ENCODE measurements at regions of chr9 and their contacts with region 1.

Region 1: GRCh38 chr9:93003552-93004407 is 54.7 kb upstream of the SUSD3 start:
- DNase-seq: peak; percentile 79
- H3K4me3 Mint-ChIP-seq: no peak overlapping the region
- H3K27ac Mint-ChIP-seq: peak overlapping the region; percentile 87
- H3K4me1 Mint-ChIP-seq: peaks cover 52% of the 10 kb centered on the region
- H3K27me3 Mint-ChIP-seq: no peaks in the 10 kb centered on the region

Region 2: GRCh38 chr9:92404042-92404836 is 599.5 kb before region 1 on chr9 and contains the start of gene OGN:
- CTCF ChIA-PET with region 1: no interaction called
- POLR2A ChIA-PET with region 1: no interaction called
- intact Hi-C with region 1: no loop called
- DNase-seq: no peak
- H3K4me3 Mint-ChIP-seq: no peak within 1 kb of the TSS
- H3K27ac Mint-ChIP-seq: no peak within 1 kb of the TSS
- H3K4me1 Mint-ChIP-seq: peaks cover 22% of the 10 kb centered on the region
- H3K27me3 Mint-ChIP-seq: no peaks in the 10 kb centered on the region
- total RNA-seq, gene OGN: not detected

Region 3: GRCh38 chr9:92911511-92912475 is 92.0 kb before region 1 on chr9:
- CTCF ChIA-PET with region 1: no interaction called
- POLR2A ChIA-PET with region 1: no interaction called
- intact Hi-C with region 1: no loop called
- DNase-seq: no peak
- H3K4me3 Mint-ChIP-seq: no peak overlapping the region
- H3K27ac Mint-ChIP-seq: no peak overlapping the region
- H3K4me1 Mint-ChIP-seq: no peaks in the 10 kb centered on the region
- H3K27me3 Mint-ChIP-seq: no peaks in the 10 kb centered on the region

Region 4: GRCh38 chr9:92954049-92954861 is 49.5 kb before region 1 on chr9:
- CTCF ChIA-PET with region 1: interaction called, 32 read pairs
- POLR2A ChIA-PET with region 1: no interaction called
- intact Hi-C with region 1: loop called (anchors 1 kb)
- DNase-seq: peak; percentile 94
- H3K4me3 Mint-ChIP-seq: peak overlapping the region; percentile 64
- H3K27ac Mint-ChIP-seq: peak overlapping the region; percentile 96
- H3K4me1 Mint-ChIP-seq: peaks cover 74% of the 10 kb centered on the region
- H3K27me3 Mint-ChIP-seq: no peaks in the 10 kb centered on the region

Region 5: DNA sequence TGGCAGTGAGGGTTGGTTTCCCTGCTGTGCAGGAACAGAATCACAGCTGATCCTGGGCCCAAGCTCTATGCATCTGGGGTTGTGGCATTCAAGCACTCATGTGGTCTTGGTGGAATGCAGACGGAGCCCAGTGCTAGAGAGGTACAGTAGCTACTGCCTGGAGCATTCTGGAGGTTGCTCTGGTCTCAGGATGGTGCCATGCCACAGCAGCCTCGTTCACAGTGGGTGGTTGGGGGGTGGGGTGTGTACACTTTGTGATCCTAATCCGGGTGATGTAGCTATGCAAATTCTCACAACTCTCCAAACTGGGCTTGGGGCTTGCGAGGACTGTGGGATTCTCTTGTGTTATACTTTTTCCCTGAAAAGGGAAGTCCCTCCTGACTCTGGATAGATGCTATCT is 11.2 kb before region 1 on chr9:
- CTCF ChIA-PET with region 1: interaction called, 42 read pairs
- POLR2A ChIA-PET with region 1: interaction called, 4 read pairs
- intact Hi-C with region 1: loop called (anchors 2 kb)
- DNase-seq: no peak
- H3K4me3 Mint-ChIP-seq: no peak overlapping the region
- H3K27ac Mint-ChIP-seq: peak overlapping the region; percentile 68
- H3K4me1 Mint-ChIP-seq: peaks cover 93% of the 10 kb centered on the region
- H3K27me3 Mint-ChIP-seq: no peaks in the 10 kb centered on the region

Region 6: GRCh38 chr9:93020771-93021670 is 17.2 kb after region 1 on chr9:
- CTCF ChIA-PET with region 1: interaction called, 23 read pairs
- POLR2A ChIA-PET with region 1: no interaction called
- intact Hi-C with region 1: no loop called
- DNase-seq: peak; percentile 78
- H3K4me3 Mint-ChIP-seq: no peak overlapping the region
- H3K27ac Mint-ChIP-seq: peak overlapping the region; percentile 85
- H3K4me1 Mint-ChIP-seq: peaks cover 50% of the 10 kb centered on the region
- H3K27me3 Mint-ChIP-seq: no peaks in the 10 kb centered on the region

Region 7: DNA sequence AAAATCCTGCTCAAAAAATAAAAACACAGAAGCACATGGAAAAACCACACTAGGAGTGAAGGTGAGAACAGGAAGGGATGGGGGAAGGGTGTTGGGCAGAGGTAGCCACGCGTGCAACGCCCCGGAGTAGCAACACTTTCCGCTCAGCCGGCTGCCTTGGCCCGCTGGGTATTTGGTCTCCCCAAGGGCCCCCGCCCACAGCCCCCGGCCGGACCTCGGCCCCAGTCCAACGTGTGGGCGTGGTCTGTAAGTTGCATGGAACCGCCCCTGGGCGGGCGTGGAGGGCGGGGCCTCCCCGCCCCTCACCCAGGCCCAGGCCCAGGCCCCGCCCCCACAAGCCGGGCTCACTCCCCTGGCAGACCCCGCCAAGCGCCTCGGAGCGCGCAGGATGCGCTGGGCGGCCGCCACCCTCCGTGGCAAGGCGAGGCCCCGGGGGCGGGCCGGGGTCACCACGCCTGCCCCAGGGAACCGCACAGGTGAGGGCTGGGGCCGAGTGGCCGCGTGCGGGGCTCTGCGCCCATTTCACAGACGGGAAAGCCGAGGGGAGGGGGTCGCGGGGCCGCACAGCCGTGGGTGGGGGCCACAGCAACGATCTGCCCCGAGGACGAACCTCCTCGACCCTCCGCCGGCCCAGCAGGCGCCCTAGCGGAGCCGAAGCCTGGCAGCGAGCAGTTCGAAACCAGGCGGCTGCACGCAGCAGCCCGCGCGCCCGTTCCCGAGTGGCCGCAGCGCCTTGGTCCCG is 54.7 kb after region 1 on chr9 and contains the start of gene SUSD3:
- CTCF ChIA-PET with region 1: interaction called, 17 read pairs
- POLR2A ChIA-PET with region 1: no interaction called
- intact Hi-C with region 1: no loop called
- DNase-seq: peak; percentile 82
- H3K4me3 Mint-ChIP-seq: peak within 1 kb of the TSS; percentile 90
- H3K27ac Mint-ChIP-seq: peak within 1 kb of the TSS; percentile 99
- H3K4me1 Mint-ChIP-seq: peaks cover 44% of the 10 kb centered on the region
- H3K27me3 Mint-ChIP-seq: no peaks in the 10 kb centered on the region
- total RNA-seq, gene SUSD3: 67.0 to 72.8 TPM

Region 8: DNA sequence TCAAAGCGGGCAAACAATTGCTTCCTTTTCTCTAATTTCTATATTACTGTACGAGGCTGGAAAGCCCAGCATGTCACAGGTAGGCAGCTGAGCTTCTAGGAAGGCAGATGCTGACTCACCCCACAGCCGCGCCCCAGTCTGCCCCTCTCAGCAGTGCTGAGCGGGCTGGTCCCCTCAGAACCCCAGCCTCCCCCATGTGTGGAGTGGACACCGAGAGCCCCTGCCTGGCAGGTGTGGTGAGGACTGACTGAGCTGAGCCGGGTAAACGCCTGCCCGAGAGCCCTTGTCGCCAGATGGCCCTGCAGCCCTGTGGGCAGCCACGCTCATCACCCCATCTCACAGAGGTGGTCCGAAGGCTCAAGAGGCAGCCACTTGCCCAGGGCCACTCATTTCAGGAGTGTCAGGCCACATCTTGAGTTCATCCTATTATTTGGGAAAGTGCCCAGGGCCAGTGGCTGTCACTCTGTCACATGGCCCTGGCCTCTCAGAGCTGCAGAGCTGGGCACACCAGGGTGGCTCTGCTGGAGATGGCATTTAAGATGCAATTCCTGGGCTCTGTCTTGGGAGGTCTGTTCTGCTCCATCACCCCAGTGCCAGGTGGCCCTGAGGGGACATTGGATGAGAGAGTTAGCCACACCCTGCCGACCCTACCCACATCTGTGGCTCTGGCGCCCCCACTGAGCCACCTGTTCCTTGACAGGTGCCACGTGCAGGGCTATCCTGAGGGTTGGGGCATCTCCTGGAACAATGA is 104.7 kb after region 1 on chr9:
- CTCF ChIA-PET with region 1: interaction called, 80 read pairs
- POLR2A ChIA-PET with region 1: no interaction called
- intact Hi-C with region 1: loop called (anchors 2 kb)
- DNase-seq: peak; percentile 82
- H3K4me3 Mint-ChIP-seq: no peak overlapping the region
- H3K27ac Mint-ChIP-seq: peak overlapping the region; percentile 77
- H3K4me1 Mint-ChIP-seq: peaks cover 55% of the 10 kb centered on the region
- H3K27me3 Mint-ChIP-seq: no peaks in the 10 kb centered on the region

Measured in activated CD4-positive, alpha-beta memory T cell treated with anti-CD3 and anti-CD28 coated beads for 36 hours (primary cell).